Dorsolateral prefrontal cortex (tissue), 120 donors: ENCODE measurements at regions of chr14 and their contacts with region 1.

Region 1: GRCh38 chr14:64294672-64295413 is 672 bp upstream of the ESR2 start:
- DNase-seq: peak in 9 of 10 donors; percentile 18 to 72 (median 52)
- H3K4me3 ChIP-seq: peak overlapping the region in 57 of 59 donors; percentile 23 to 72 (median 55)
- H3K27ac ChIP-seq: no peak overlapping the region
- H3K27me3 ChIP-seq: peaks cover 0 to 43% (median 21%) of the 10 kb centered on the region in 45 donors
- CTCF ChIP-seq: peak; percentile 46 to 85 (median 75)

Region 2: GRCh38 chr14:64012720-64013119 is 282.1 kb before region 1 on chr14:
- intact Hi-C with region 1: loop called (anchors 5 to 10 kb)
- DNase-seq: no peak
- H3K4me3 ChIP-seq: no peak overlapping the region
- H3K27ac ChIP-seq: no peak overlapping the region
- H3K27me3 ChIP-seq: no peaks in the 10 kb centered on the region
- CTCF ChIP-seq: no peak

Region 3: GRCh38 chr14:64137657-64138290 is 157.1 kb before region 1 on chr14:
- intact Hi-C with region 1: loop called in 1 of 2 experiments (anchors 5 kb)
- DNase-seq: peak in 1 of 10 donors; percentile 46
- H3K4me3 ChIP-seq: no peak overlapping the region
- H3K27ac ChIP-seq: no peak overlapping the region
- H3K27me3 ChIP-seq: no peaks in the 10 kb centered on the region
- CTCF ChIP-seq: peak in 30 of 56 donors; percentile 12 to 50 (median 23)

Region 4: GRCh38 chr14:64196814-64197411 is 97.9 kb before region 1 on chr14:
- intact Hi-C with region 1: no loop called
- DNase-seq: peak; percentile 60 to 89 (median 82)
- H3K4me3 ChIP-seq: peak overlapping the region; percentile 38 to 78 (median 61)
- H3K27ac ChIP-seq: peak overlapping the region in 58 of 59 donors; percentile 18 to 97 (median 87)
- H3K27me3 ChIP-seq: no peaks in the 10 kb centered on the region
- CTCF ChIP-seq: peak in 2 of 56 donors; percentile 12

Region 5: DNA sequence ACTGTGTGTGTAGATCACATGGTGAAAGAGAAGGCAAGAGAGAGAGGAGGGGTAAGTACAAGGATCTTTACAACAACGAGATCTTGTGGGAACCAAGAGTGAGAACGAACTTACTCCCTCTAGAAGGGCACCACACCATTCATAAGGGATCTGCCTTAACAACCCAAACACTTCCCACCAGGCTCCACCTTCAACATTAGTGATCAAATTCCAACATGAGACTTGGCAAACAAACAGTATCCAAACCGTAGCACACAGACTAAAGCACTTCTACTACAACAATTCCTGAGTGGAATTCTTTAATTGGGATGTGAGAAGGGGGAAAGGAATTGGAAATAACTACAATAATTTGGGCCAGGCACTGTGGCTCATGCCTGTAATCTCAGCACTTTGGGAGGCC is 34.3 kb after region 1 on chr14:
- intact Hi-C with region 1: no loop called
- DNase-seq: no peak
- H3K4me3 ChIP-seq: no peak overlapping the region
- H3K27ac ChIP-seq: no peak overlapping the region
- H3K27me3 ChIP-seq: no peaks in the 10 kb centered on the region
- CTCF ChIP-seq: no peak

Region 6: GRCh38 chr14:64841121-64841651 is 546.3 kb after region 1 on chr14:
- intact Hi-C with region 1: no loop called
- DNase-seq: no peak
- H3K4me3 ChIP-seq: no peak overlapping the region
- H3K27ac ChIP-seq: no peak overlapping the region
- H3K27me3 ChIP-seq: peaks cover 0 to 12% (median 0%) of the 10 kb centered on the region in 45 donors
- CTCF ChIP-seq: no peak